ENCODE measurements at regions of chr9 and their contacts with region 1.

Region 1: DNA sequence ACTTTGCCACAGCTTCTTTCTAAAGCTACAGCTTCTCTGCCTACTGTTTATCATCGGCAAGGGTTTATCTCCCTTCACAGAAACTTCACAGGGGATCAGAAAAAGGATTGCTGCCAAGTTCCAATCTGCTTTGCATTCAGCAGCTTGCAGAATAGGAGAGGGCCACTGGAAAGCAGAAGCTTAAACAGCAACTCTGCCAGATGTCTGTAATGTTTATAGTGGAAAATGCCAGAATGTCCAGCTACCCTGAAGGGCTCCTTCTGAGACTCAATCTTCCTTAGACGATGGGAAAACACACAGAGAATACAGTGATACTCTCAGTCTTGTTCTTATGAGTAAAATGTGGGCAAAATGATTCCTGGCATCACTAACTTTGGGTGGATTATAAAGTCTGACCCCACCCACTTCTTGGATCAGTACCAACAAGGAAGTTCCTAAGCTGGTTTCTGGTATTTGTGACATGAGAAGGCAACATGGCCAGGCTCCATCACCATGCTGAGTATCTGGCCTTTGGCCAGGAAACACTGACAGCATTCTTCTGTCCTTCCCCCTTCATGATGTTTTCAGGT is 19.0 kb downstream of the STOM start:
- DNase-seq: peak; percentile 90
- H3K4me3 Mint-ChIP-seq: no peak overlapping the region
- H3K27ac Mint-ChIP-seq: no peak overlapping the region
- H3K4me1 Mint-ChIP-seq: peaks cover 52% of the 10 kb centered on the region
- H3K27me3 Mint-ChIP-seq: no peaks in the 10 kb centered on the region
- CTCF ChIP-seq: no peak

Region 2: DNA sequence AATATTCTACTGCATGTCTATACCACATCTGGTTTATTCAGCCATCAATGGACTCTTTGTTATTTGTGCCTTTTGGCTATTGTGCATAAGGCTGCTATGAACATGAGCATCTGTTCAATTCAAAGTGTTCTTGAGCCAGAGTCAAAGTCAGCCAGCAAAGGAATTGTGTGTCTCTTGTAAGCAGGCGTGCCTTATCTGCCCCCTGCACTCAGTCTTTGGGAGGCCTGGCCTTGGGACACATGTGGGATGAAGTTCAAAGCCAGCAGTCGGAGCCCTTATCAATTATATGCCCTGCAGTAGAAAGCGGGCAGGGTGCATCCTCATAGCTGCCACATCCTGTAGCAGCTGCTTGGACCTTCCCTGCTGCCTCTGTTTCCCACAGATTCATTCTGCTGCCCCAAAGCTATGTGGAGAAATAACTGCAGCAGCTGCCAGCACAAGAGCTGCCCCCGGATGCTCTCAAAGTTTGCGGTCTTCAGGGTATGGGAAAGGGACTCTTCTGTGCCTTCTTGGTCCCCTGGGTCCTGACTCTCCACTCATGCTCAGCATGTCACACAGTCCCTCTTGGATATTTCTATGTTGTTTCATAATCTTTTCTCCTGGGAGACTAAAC is 17.0 kb before region 1 on chr9:
- CTCF ChIA-PET with region 1: interaction called, 12 read pairs
- POLR2A ChIA-PET with region 1: interaction called, 37 read pairs
- intact Hi-C with region 1: no loop called
- DNase-seq: no peak
- H3K4me3 Mint-ChIP-seq: no peak overlapping the region
- H3K27ac Mint-ChIP-seq: peak overlapping the region; percentile 68
- H3K4me1 Mint-ChIP-seq: peaks cover 13% of the 10 kb centered on the region
- H3K27me3 Mint-ChIP-seq: no peaks in the 10 kb centered on the region
- CTCF ChIP-seq: no peak

Region 3: DNA sequence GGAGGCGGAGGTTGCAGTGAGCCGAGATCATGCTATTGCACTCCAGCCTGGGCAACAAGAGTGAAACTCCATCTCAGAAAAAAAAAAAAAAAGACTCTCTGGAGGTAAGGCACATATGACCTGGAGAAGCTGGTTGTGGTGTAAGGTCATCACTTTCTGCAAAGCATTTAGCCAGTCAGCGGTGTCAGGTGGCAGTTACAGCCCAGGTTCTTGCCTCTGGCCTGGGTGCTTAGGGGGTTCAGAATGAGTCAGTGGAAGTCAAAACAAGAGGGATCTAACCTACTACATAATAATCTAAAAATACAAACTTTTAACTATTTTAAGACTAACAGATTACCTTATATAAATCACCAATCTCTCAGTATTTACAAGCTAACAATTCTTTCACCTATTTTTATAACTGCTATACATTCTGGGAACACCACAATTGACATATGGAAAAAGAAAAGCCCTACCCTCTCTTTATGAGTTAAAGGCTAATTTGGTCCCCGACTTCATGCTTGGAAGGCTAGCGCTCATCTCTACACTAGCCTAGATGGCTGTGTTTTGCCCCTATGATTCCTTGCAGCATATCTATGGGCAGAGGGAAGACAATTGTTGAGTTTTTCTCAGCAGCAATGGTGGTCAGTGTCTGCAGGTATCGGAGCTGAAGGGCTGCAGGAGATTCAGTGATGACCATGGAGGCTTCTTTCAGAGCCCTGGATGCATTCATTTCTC is 10.2 kb before region 1 on chr9:
- CTCF ChIA-PET with region 1: interaction called, 12 read pairs
- POLR2A ChIA-PET with region 1: interaction called, 37 read pairs
- intact Hi-C with region 1: no loop called
- DNase-seq: no peak
- H3K4me3 Mint-ChIP-seq: no peak overlapping the region
- H3K27ac Mint-ChIP-seq: peak overlapping the region; percentile 31
- H3K4me1 Mint-ChIP-seq: peaks cover 17% of the 10 kb centered on the region
- H3K27me3 Mint-ChIP-seq: no peaks in the 10 kb centered on the region
- CTCF ChIP-seq: no peak

Region 4: DNA sequence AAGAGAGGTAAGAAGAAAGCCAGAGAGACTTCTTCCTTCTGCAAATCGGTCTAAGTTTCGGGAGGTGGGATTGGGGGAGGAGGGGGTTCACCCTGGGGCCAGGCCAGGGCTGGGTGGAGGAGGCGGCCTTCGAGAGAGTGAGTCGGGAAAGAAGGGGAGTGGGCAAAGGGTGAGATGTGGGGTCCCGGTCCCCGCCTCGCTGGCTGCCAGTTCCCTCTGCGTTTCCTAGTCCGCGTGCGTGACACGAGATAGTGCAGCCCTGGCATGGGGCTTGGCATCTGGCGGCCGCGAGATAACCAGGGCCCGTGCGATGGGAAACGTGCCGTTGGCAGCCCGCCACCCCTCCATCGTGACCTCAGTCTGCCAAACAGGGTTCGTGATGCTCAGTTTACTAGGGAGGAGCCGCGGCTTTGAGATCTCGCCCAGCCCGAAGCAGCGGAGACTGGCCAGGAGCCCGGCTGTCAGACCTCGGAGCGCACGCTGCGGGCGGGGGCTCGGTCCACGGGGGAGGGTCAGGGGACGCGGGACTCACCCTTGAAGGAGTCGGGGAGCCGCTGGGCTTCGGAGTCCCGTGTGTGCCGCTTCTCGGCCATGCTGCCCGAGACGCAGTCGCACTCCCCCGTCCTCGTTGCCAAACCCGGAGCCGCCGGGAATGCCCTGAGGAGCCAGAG is 18.7 kb after region 1 on chr9 and contains the start of gene STOM:
- CTCF ChIA-PET with region 1: interaction called, 6 read pairs
- POLR2A ChIA-PET with region 1: interaction called, 22 read pairs
- intact Hi-C with region 1: no loop called
- DNase-seq: peak; percentile 91
- H3K4me3 Mint-ChIP-seq: peak within 1 kb of the TSS; percentile 86
- H3K27ac Mint-ChIP-seq: peak within 1 kb of the TSS; percentile 92
- H3K4me1 Mint-ChIP-seq: peaks cover 48% of the 10 kb centered on the region
- H3K27me3 Mint-ChIP-seq: no peaks in the 10 kb centered on the region
- CTCF ChIP-seq: no peak
- total RNA-seq, gene STOM: 200 and 231 TPM in 2 replicates